ENCODE measurements at regions of chr20 and their contacts with region 1.

Region 1: GRCh38 chr20:47620808-47621805 is 119.4 kb downstream of the NCOA3 start:
- DNase-seq: peak; percentile 86
- ATAC-seq: 0 out of 2 replicates have a peak, but pooled peaks have one; percentile 38
- H3K4me3 ChIP-seq: no peak overlapping the region
- H3K27ac ChIP-seq: no peak overlapping the region
- H3K4me1 ChIP-seq: peaks cover 5% of the 10 kb centered on the region; the same call in 1 of the 2 replicates
- H3K27me3 ChIP-seq: no peaks in the 10 kb centered on the region
- CTCF ChIP-seq: peak; percentile 92

Region 2: GRCh38 chr20:47196091-47197081 is 424.7 kb before region 1 on chr20:
- CTCF ChIA-PET with region 1: no interaction called
- POLR2A ChIA-PET with region 1: no interaction called
- intact Hi-C with region 1: loop called (anchors 1 kb)
- DNase-seq: peak; percentile 88
- ATAC-seq: peak; percentile 76
- H3K4me3 ChIP-seq: peak overlapping the region; percentile 49
- H3K27ac ChIP-seq: no peak overlapping the region
- H3K4me1 ChIP-seq: peaks cover 29% of the 10 kb centered on the region
- H3K27me3 ChIP-seq: no peaks in the 10 kb centered on the region
- CTCF ChIP-seq: peak; percentile 99

Region 3: GRCh38 chr20:47392015-47392720 is 228.9 kb before region 1 on chr20:
- CTCF ChIA-PET with region 1: no interaction called
- POLR2A ChIA-PET with region 1: interaction called, 3 read pairs
- intact Hi-C with region 1: loop called (anchors 2 kb)
- DNase-seq: peak; percentile 99
- ATAC-seq: peak; percentile 82
- H3K4me3 ChIP-seq: peak overlapping the region; percentile 57
- H3K27ac ChIP-seq: peak overlapping the region; percentile 97
- H3K4me1 ChIP-seq: peaks cover 37% of the 10 kb centered on the region
- H3K27me3 ChIP-seq: no peaks in the 10 kb centered on the region
- CTCF ChIP-seq: no peak

Region 4: GRCh38 chr20:47493175-47493962 is 127.7 kb before region 1 on chr20:
- CTCF ChIA-PET with region 1: interaction called, 10 read pairs
- POLR2A ChIA-PET with region 1: no interaction called
- intact Hi-C with region 1: no loop called
- DNase-seq: peak; percentile 93
- ATAC-seq: peak; percentile 91
- H3K4me3 ChIP-seq: peak overlapping the region; percentile 15; the same call in 1 of the 2 replicates
- H3K27ac ChIP-seq: peak overlapping the region; percentile 63
- H3K4me1 ChIP-seq: peaks cover 24% of the 10 kb centered on the region
- H3K27me3 ChIP-seq: no peaks in the 10 kb centered on the region
- CTCF ChIP-seq: no peak

Region 5: DNA sequence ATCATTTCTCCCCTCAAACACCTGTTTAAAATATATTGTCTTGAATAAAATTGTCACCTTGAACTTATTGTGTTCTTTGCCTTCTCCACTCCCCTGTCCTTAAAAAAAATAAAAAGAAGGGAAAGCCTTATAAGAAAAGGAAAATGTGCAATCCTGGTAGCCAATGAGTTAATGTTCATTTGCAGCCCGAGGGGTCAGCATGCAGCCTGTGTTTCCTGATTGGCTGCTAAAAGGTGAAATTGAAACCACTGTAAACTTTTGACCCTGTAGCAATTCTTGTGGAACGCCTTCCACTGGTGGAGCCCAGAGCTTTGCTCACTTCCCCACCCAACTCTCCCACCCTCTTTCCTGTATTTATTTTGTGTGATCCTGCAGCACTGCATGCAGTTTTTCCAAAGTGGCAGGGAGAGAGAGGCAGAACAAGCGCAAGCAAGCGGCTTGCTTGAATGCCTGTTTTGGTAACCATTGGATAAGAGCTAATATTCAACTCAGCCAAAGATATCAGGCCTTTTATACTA is 44.5 kb before region 1 on chr20:
- CTCF ChIA-PET with region 1: no interaction called
- POLR2A ChIA-PET with region 1: no interaction called
- intact Hi-C with region 1: loop called (anchors 5 kb)
- DNase-seq: peak; percentile 93
- ATAC-seq: peak; percentile 92
- H3K4me3 ChIP-seq: peak overlapping the region; percentile 36
- H3K27ac ChIP-seq: peak overlapping the region; percentile 67
- H3K4me1 ChIP-seq: peaks cover 44% of the 10 kb centered on the region
- H3K27me3 ChIP-seq: no peaks in the 10 kb centered on the region
- CTCF ChIP-seq: no peak

Measured in PC-3 (cell line).